Left lung (tissue), 14 donors: ENCODE measurements at regions of chr5 and their contacts with region 1.

Region 1: GRCh38 chr5:81751009-81751835 is at the start of gene SSBP2:
- DNase-seq: peak; percentile 99 to 100 (median 100)
- ATAC-seq: peak; percentile 94
- H3K4me3 ChIP-seq: peak within 1 kb of the TSS; percentile 65 to 84
- H3K27ac ChIP-seq: peak within 1 kb of the TSS; percentile 98
- H3K4me1 ChIP-seq: peaks cover 10 to 38% of the 10 kb centered on the region in 2 donors
- H3K27me3 ChIP-seq: peaks cover 0 to 10% of the 10 kb centered on the region in 2 donors
- CTCF ChIP-seq: no peak
- polyA plus RNA-seq, gene SSBP2: 65.1 to 103 (median 78.5) TPM

Region 2: GRCh38 chr5:81425569-81425968 is 325.7 kb before region 1 on chr5:
- intact Hi-C with region 1: loop called in 1 of 2 experiments (anchors 10 kb)
- DNase-seq: peak in 1 of 4 donors; percentile 44
- ATAC-seq: peak; percentile 79
- H3K4me3 ChIP-seq: no peak overlapping the region
- H3K27ac ChIP-seq: peak overlapping the region in 1 of 2 donors; percentile 9
- H3K4me1 ChIP-seq: peaks cover 0 to 12% of the 10 kb centered on the region in 2 donors
- H3K27me3 ChIP-seq: no peaks in the 10 kb centered on the region
- CTCF ChIP-seq: peak; percentile 52 to 57

Region 3: GRCh38 chr5:81513982-81514381 is 237.2 kb before region 1 on chr5:
- intact Hi-C with region 1: loop called in 1 of 2 experiments (anchors 10 kb)
- DNase-seq: no peak
- ATAC-seq: peak; percentile 33
- H3K4me3 ChIP-seq: no peak overlapping the region
- H3K27ac ChIP-seq: no peak overlapping the region
- H3K4me1 ChIP-seq: no peaks in the 10 kb centered on the region
- H3K27me3 ChIP-seq: no peaks in the 10 kb centered on the region
- CTCF ChIP-seq: no peak

Region 4: GRCh38 chr5:81787474-81788242 is 36.4 kb after region 1 on chr5:
- intact Hi-C with region 1: loop called in 1 of 2 experiments (anchors 5 kb)
- DNase-seq: peak in 3 of 4 donors; percentile 51 to 92 (median 89)
- ATAC-seq: peak; percentile 74
- H3K4me3 ChIP-seq: no peak overlapping the region
- H3K27ac ChIP-seq: peak overlapping the region; percentile 18 to 44
- H3K4me1 ChIP-seq: peaks cover 7 to 28% of the 10 kb centered on the region in 2 donors
- H3K27me3 ChIP-seq: no peaks in the 10 kb centered on the region
- CTCF ChIP-seq: no peak

Region 5: DNA sequence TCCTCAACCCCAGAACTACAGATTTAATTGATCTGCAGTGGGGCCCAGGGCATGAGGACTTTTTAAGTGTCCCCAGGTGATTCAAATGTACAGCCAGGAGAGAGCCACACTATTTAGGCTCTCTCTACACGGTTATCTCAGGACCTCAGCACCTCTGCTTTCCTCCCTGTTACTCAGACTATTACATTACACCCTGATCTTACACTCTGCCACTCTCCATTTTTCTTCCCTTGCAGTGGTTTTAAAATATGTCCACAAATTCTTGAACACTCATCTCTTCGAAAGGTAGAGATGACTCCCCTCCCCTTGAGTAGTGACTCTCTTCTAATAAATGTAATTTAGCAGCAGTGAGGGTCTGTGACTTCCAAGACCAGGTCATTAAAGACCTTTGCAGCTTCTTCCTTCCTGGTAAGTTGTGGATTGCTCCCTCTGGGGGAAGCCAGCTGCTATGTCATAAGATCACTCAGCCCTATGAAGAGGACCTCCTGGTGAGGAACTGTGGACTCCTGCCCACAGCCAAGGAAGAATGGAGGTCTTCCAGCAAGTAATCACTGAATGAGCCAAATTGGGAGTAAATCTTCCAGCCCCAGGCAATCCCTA is 87.2 kb after region 1 on chr5:
- intact Hi-C with region 1: no loop called
- DNase-seq: no peak
- ATAC-seq: peak; percentile 77
- H3K4me3 ChIP-seq: no peak overlapping the region
- H3K27ac ChIP-seq: no peak overlapping the region
- H3K4me1 ChIP-seq: peaks cover 0 to 5% of the 10 kb centered on the region in 2 donors
- H3K27me3 ChIP-seq: no peaks in the 10 kb centered on the region
- CTCF ChIP-seq: peak; percentile 34 to 53

Region 6: DNA sequence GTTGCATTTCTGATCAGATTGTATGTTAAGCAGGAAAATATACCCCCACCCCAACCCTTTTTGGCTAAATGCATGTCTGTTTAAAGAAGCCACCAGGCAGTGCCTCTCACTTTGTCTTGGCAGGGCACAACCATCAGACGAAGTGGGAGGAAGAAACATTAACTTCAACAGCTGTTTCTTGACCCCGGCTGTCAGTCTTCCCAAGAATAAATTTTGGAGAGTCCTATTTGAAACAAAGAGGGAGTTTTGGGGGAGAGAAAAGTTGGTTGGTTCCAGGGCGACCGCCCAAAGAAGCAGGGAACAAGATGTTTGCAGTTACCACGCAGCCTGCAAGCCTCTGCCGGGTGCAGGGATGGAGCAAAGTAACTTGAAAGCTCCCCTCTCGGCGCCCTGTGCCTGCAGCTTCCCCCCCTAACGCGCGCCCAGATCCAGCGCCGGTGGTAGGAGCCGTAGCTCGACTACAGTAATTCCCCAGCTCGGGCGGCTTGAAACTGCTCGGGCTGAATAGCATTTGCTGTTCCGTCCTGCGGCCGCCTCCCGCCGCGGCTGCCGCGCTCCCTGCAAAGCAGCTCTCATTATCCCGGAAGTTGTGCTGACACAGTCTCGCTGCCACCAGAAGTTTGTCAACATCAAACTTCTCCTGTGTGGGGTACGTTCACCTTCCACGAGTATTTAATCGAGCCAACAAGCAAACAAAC is 100.4 kb after region 1 on chr5:
- intact Hi-C with region 1: loop called (anchors 5 kb)
- DNase-seq: peak; percentile 96 to 99 (median 98)
- ATAC-seq: peak; percentile 97
- H3K4me3 ChIP-seq: peak overlapping the region; percentile 45 to 47
- H3K27ac ChIP-seq: peak overlapping the region; percentile 93 to 95
- H3K4me1 ChIP-seq: peaks cover 11 to 25% of the 10 kb centered on the region in 2 donors
- H3K27me3 ChIP-seq: no peaks in the 10 kb centered on the region
- CTCF ChIP-seq: no peak

Region 7: GRCh38 chr5:81971712-81972495 is 220.7 kb after region 1 on chr5 and contains the start of gene ATG10:
- intact Hi-C with region 1: loop called in 1 of 2 experiments (anchors 10 kb)
- DNase-seq: peak; percentile 94 to 98 (median 98)
- ATAC-seq: peak; percentile 99
- H3K4me3 ChIP-seq: peak within 1 kb of the TSS; percentile 50 to 71
- H3K27ac ChIP-seq: peak within 1 kb of the TSS; percentile 98 to 99
- H3K4me1 ChIP-seq: peaks cover 0 to 16% of the 10 kb centered on the region in 2 donors
- H3K27me3 ChIP-seq: no peaks in the 10 kb centered on the region
- CTCF ChIP-seq: no peak
- polyA plus RNA-seq, gene ATG10: 9.6 to 15.7 (median 11.7) TPM